Vagina (tissue), 2 donors: ENCODE measurements at regions of chr17 and their contacts with region 1.

Region 1: GRCh38 chr17:73288515-73289302 is 23.1 kb downstream of the CDC42EP4 start:
- DNase-seq: no peak
- H3K4me3 ChIP-seq: no peak overlapping the region
- H3K27ac ChIP-seq: peak overlapping the region; percentile 93
- H3K4me1 ChIP-seq: peaks cover 100% of the 10 kb centered on the region
- H3K27me3 ChIP-seq: no peaks in the 10 kb centered on the region
- CTCF ChIP-seq: no peak
- POLR2A ChIP-seq: no peak

Region 2: GRCh38 chr17:72349491-72349995 is 939.2 kb before region 1 on chr17:
- intact Hi-C with region 1: loop called (anchors 5 kb)
- DNase-seq: no peak
- H3K4me3 ChIP-seq: no peak overlapping the region
- H3K27ac ChIP-seq: no peak overlapping the region
- H3K4me1 ChIP-seq: no peaks in the 10 kb centered on the region
- H3K27me3 ChIP-seq: no peaks in the 10 kb centered on the region
- CTCF ChIP-seq: no peak
- POLR2A ChIP-seq: no peak

Region 3: GRCh38 chr17:73401911-73402310 is 113.2 kb after region 1 on chr17:
- intact Hi-C with region 1: no loop called
- DNase-seq: no peak
- H3K4me3 ChIP-seq: no peak overlapping the region
- H3K27ac ChIP-seq: no peak overlapping the region
- H3K4me1 ChIP-seq: no peaks in the 10 kb centered on the region
- H3K27me3 ChIP-seq: no peaks in the 10 kb centered on the region
- CTCF ChIP-seq: no peak
- POLR2A ChIP-seq: no peak

Region 4: GRCh38 chr17:73532421-73532901 is 243.8 kb after region 1 on chr17:
- intact Hi-C with region 1: no loop called
- DNase-seq: no peak
- H3K4me3 ChIP-seq: no peak overlapping the region
- H3K27ac ChIP-seq: no peak overlapping the region
- H3K4me1 ChIP-seq: no peaks in the 10 kb centered on the region
- H3K27me3 ChIP-seq: no peaks in the 10 kb centered on the region
- CTCF ChIP-seq: no peak
- POLR2A ChIP-seq: no peak